ENCODE measurements at regions of chr5 and their contacts with region 1.

Region 1: DNA sequence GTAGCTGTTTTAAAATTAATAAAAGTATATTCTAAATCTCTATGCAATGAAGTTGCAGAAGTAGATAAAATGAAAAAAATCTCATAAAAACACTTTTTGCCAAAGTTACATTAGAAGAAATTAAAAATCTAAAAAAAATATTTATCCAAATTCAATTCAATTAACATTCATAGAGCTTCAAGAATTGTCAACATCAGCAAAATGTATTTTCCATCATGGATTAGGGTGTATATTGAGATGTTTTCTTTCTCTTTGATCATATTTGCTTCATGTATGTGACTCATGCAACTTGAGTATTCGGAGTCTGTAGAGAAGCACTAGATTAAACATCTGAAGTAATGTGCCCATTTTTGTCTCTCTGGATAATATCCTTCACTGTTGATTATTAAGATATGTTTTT is 415.3 kb upstream of the FAM174A start:
- DNase-seq: no peak
- ATAC-seq: no peak
- H3K4me3 ChIP-seq: no peak overlapping the region
- H3K27ac ChIP-seq: no peak overlapping the region
- H3K4me1 ChIP-seq: no peaks in the 10 kb centered on the region
- H3K27me3 ChIP-seq: no peaks in the 10 kb centered on the region
- CTCF ChIP-seq: no peak
- POLR2A ChIP-seq: no peak
- RAD21 ChIP-seq: no peak

Region 2: DNA sequence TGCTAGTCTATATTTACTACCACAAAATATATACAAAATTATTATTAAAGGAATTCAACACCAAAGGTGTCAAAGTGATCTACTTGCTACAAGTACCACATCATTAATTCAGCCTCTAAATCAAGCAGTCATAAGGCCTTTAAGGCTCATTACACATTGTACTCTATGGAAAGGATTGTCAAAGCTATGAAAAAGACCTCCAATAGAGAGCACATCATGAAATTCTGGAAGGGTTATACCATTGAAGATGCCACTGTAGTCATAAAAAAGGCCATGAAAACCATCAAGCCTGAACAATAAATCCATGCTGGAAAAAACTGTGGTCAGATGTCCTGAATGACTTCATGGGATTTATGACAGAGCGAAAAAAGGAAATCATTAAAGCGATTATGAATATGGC is 292.8 kb before region 1 on chr5:
- CTCF ChIA-PET with region 1: no interaction called
- POLR2A ChIA-PET with region 1: no interaction called
- dilution Hi-C with region 1: no loop called
- in situ Hi-C with region 1: no loop called
- intact Hi-C with region 1: loop called (anchors 10 kb)
- DNase-seq: no peak
- ATAC-seq: no peak
- H3K4me3 ChIP-seq: no peak overlapping the region
- H3K27ac ChIP-seq: no peak overlapping the region
- H3K4me1 ChIP-seq: no peaks in the 10 kb centered on the region
- H3K27me3 ChIP-seq: no peaks in the 10 kb centered on the region
- CTCF ChIP-seq: no peak
- POLR2A ChIP-seq: no peak
- RAD21 ChIP-seq: no peak

Region 3: DNA sequence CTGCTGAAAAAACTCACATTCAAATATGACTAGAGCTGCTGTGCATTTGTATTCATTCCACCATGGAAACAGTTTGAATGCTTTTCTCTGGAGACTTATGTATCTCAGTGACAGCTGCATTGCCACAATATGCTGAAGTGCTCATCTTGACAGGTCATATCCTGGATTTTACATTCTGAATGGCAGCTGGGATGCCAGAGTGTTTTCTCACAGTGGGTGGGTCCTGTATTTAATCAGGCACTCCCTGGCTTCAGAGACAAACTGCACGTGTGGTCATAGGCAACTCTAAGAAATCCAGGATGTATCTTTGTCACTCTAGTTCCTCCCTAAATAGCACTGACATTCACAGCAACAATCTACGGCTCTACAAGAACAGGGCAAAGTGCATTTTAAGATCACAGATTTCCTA is 707.6 kb after region 1 on chr5:
- CTCF ChIA-PET with region 1: no interaction called
- POLR2A ChIA-PET with region 1: no interaction called
- dilution Hi-C with region 1: no loop called
- in situ Hi-C with region 1: no loop called
- intact Hi-C with region 1: no loop called
- DNase-seq: no peak
- ATAC-seq: no peak
- H3K4me3 ChIP-seq: no peak overlapping the region
- H3K27ac ChIP-seq: no peak overlapping the region
- H3K4me1 ChIP-seq: no peaks in the 10 kb centered on the region
- H3K27me3 ChIP-seq: no peaks in the 10 kb centered on the region
- CTCF ChIP-seq: no peak
- POLR2A ChIP-seq: no peak
- RAD21 ChIP-seq: no peak

Measured in IMR-90 (cell line).